Heart right ventricle (tissue), 16 donors: ENCODE measurements at regions of chr18 and their contacts with region 1.

Region 1: DNA sequence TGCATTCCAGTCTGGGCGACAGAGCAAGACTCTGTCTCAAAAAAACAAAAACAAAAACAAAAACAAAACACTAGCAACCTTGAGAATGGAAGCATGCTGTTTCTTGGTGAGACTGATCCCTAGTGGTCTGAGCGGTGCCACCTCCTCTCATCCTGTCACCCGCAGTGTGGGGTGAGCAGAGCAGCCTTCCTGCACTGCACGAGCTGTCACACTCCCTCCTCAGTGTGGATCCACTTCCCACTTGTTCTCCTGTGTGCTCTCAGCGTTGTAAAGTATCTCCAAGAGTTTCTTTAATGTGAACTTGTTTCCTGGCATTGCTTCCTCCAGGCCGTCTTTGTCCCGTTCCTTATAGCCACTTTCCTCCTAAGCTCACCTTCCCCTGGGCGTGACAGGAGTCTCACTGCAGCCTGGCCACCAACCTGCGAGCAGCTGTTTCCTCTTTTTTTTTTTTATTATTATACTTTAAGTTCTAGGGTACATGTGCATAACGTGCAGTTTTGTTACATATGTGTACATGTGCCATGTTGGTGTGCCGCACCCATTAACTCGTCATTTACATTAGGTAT is 220.5 kb downstream of the FAM210A start:
- DNase-seq: no peak
- ATAC-seq: no peak
- H3K4me3 ChIP-seq: no peak overlapping the region
- H3K27ac ChIP-seq: no peak overlapping the region
- H3K4me1 ChIP-seq: peaks cover 7 to 39% (median 27%) of the 10 kb centered on the region in 9 donors
- H3K27me3 ChIP-seq: no peaks in the 10 kb centered on the region
- CTCF ChIP-seq: no peak

Region 2: GRCh38 chr18:13549880-13550232 is 44.0 kb after region 1 on chr18:
- intact Hi-C with region 1: loop called in 1 of 10 experiments (anchors 1 kb)
- DNase-seq: no peak
- ATAC-seq: no peak
- H3K4me3 ChIP-seq: no peak overlapping the region
- H3K27ac ChIP-seq: peak overlapping the region in 8 of 10 donors; percentile 7 to 57 (median 51)
- H3K4me1 ChIP-seq: peaks cover 0 to 52% (median 29%) of the 10 kb centered on the region in 9 donors
- H3K27me3 ChIP-seq: no peaks in the 10 kb centered on the region
- CTCF ChIP-seq: no peak

Region 3: DNA sequence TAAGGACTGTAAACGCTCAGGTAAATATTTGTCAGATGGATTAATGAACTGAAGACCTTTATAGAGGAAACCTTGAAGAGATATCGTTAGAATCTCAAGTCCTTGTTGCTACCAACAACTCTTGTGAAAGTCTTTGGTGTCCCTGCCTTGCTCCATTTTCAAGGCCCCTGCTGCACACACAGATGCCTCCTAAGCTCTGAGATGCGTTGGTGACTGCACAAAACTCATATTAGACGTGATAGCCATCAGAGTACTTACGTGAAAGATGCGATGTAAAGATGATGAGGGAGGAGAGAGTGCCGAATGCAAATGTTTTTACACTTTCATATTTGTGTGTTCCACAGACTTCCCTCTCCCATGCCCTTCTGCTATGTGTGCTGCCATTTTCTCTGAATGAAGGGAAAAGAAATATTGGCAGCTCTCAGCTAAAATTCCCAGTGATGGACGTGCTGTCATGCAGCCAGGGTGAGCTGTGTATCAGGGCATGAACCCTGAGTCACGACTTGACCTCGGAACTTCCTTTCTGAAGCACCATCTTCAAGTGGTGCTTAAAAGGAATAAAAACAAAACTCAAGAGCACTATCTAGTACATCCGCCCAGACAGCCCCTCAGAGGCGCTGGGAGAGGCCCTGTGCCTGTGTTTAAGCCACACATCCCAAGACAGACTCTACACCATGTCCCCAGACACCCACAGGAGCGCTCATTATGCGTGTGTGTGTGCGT is 103.1 kb after region 1 on chr18:
- intact Hi-C with region 1: no loop called
- DNase-seq: no peak
- ATAC-seq: no peak
- H3K4me3 ChIP-seq: no peak overlapping the region
- H3K27ac ChIP-seq: no peak overlapping the region
- H3K4me1 ChIP-seq: peaks cover 5 to 50% (median 36%) of the 10 kb centered on the region in 9 donors
- H3K27me3 ChIP-seq: no peaks in the 10 kb centered on the region
- CTCF ChIP-seq: no peak